ENCODE measurements at regions of chr11 and their contacts with region 1.

Region 1: GRCh38 chr11:45964911-45965389 is 42.5 kb downstream of the LARGE2 start:
- DNase-seq: peak; percentile 48
- H3K4me3 ChIP-seq: no peak overlapping the region
- H3K27ac ChIP-seq: peak overlapping the region in 1 of 4 donors; percentile 31
- H3K4me1 ChIP-seq: no peaks in the 10 kb centered on the region
- H3K27me3 ChIP-seq: no peaks in the 10 kb centered on the region
- CTCF ChIP-seq: peak; percentile 82 to 91 (median 85)
- EP300 ChIP-seq: no peak
- POLR2A ChIP-seq: no peak

Region 2: GRCh38 chr11:46006418-46007070 is 41.6 kb after region 1 on chr11:
- in situ Hi-C with region 1: no loop called
- intact Hi-C with region 1: loop called (anchors 2 kb)
- DNase-seq: no peak
- H3K4me3 ChIP-seq: no peak overlapping the region
- H3K27ac ChIP-seq: no peak overlapping the region
- H3K4me1 ChIP-seq: peaks cover 0 to 17% (median 2%) of the 10 kb centered on the region in 4 donors
- H3K27me3 ChIP-seq: no peaks in the 10 kb centered on the region
- CTCF ChIP-seq: peak; percentile 54 to 67 (median 63)
- EP300 ChIP-seq: no peak
- POLR2A ChIP-seq: no peak

Region 3: DNA sequence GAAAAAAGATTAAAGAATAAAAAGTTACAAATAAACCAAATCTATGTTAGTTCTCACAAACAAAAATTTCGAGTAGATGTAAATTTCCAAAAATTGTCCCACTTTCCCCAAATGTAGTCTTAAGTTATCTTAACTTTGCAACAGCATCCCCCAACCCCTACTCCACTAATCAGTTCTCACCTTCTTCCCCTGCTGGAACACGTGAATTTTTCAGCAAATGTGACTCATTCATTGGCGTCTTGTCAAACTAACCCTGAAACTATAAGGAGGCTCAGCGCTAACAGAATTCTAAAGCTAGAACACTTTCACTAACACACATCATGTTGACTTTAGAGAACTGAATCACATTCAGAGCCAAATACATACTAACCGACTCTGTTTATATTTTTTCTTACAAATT is 110.2 kb after region 1 on chr11:
- in situ Hi-C with region 1: no loop called
- intact Hi-C with region 1: no loop called
- DNase-seq: no peak
- H3K4me3 ChIP-seq: no peak overlapping the region
- H3K27ac ChIP-seq: no peak overlapping the region
- H3K4me1 ChIP-seq: no peaks in the 10 kb centered on the region
- H3K27me3 ChIP-seq: no peaks in the 10 kb centered on the region
- CTCF ChIP-seq: no peak
- EP300 ChIP-seq: no peak
- POLR2A ChIP-seq: no peak